GM12878 (cell line): ENCODE measurements at regions of chr19 and their contacts with region 1.

Region 1: GRCh38 chr19:10502524-10503001 is 593 bp downstream of the KEAP1 start:
- DNase-seq: peak; percentile 61
- ATAC-seq: peak; percentile 90
- H3K4me3 ChIP-seq: peak overlapping the region; percentile 77
- H3K27ac ChIP-seq: peak overlapping the region; percentile 99
- H3K4me1 ChIP-seq: peaks cover 25% of the 10 kb centered on the region
- H3K27me3 ChIP-seq: no peaks in the 10 kb centered on the region
- CTCF ChIP-seq: no peak
- EP300 ChIP-seq: peak in 1 of 2 experiments; percentile 39; a peak in 1 of 4 replicates
- POLR2A ChIP-seq: peak; percentile 95
- RAD21 ChIP-seq: no peak

Region 2: DNA sequence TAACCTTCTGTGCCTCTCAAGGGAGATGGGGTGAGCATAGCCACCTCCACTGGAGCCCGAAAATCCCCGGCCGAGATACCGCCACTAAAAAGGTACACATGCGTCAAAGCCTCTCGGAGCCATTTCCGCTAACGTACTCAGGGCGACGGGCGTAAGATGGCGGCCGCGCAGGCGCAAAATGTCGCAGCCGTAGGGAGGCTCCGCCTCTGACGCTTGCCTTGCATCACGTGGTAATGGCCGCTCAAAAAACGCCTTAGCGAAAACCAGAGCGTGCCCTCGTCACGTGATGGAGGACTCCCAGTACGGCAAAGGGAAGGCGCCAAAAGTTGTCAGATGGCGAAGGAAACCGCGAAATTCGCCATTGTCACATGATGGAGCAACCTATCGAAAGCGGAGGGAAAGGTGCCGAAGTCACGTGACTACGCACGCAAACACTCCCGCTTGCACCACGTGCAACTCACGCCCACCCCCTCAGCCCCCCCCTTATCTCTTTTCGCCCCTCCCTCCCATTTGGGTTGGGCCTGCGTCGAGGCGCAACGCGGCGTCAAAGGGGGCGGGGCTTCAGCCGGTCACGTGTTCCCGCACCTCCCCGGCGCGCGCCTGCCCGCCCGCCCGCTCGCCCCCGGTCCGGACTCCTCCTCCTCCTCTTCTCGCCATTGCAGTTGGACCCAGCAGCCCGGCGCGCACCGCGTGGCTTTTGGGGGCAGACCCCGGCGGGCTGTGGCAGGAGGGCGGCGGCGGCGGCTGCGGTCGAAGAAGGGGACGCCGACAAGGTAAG is 151.3 kb after region 1 on chr19 and contains the start of gene ILF3:
- CTCF ChIA-PET with region 1: interaction called, 4 read pairs
- POLR2A ChIA-PET with region 1: no interaction called
- RAD21 ChIA-PET with region 1: no interaction called
- SMC1A ChIA-PET with region 1: interaction called, 3 read pairs
- in situ Hi-C with region 1: no loop called
- intact Hi-C with region 1: loop called (anchors 5 kb)
- DNase-seq: peak; percentile 100
- ATAC-seq: peak; percentile 83
- H3K4me3 ChIP-seq: peak within 1 kb of the TSS; percentile 91
- H3K27ac ChIP-seq: peak within 1 kb of the TSS; percentile 99
- H3K4me1 ChIP-seq: peaks cover 6% of the 10 kb centered on the region
- H3K27me3 ChIP-seq: no peaks in the 10 kb centered on the region
- CTCF ChIP-seq: no peak
- EP300 ChIP-seq: peak; percentile 52 to 54
- POLR2A ChIP-seq: peak; percentile 89
- RAD21 ChIP-seq: no peak
- polyA plus RNA-seq, gene ILF3: 28.1 to 38.1 TPM